ENCODE measurements at regions of chr12 and their contacts with region 1.

Region 1: DNA sequence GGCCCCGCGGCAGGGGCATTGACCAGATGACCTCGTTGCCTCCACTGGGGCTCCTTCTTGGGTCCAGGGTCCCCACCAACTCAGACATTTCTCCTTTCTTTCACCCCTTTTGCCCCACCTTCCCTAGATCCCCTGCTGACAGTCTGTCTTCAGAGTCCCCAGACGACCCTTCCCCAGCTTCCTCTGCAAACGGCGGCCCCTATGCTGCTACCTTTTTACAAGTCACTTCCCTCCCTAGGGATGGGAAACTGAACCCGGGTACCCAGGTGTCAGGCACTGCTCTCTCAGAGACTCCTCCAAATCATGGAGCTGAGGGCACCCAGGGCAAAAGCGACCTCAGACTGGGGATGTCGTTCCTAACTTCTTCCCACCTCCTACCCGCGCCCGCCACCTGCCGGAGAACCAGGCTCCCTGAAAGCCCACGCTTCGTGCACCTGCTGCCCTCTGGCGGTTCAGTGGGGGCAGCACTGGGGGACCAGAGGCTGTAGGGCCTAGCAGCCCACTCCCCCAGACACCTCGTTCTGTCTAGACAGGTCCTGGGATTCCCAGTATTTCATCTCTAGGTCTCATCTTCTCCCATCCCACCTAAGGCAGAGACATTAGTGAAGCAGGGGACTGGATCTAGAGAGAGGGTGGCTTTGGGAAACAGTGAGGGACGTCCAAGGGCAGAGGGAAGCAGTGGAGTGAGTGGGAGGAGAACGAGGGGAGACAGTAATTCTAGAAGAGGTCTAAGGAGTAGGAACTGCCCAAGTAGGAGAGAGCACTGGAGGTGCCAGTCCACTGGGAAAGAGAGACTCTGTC is 4.9 kb downstream of the ZNF385A start:
- DNase-seq: peak; percentile 83
- H3K4me3 ChIP-seq: peak overlapping the region in 2 of 3 experiments; percentile 10 to 47
- H3K27ac ChIP-seq: no peak overlapping the region
- H3K4me1 ChIP-seq: peaks cover 4% of the 10 kb centered on the region
- H3K27me3 ChIP-seq: no peaks in the 10 kb centered on the region
- CTCF ChIP-seq: peak; percentile 100
- POLR2A ChIP-seq: no peak

Region 2: DNA sequence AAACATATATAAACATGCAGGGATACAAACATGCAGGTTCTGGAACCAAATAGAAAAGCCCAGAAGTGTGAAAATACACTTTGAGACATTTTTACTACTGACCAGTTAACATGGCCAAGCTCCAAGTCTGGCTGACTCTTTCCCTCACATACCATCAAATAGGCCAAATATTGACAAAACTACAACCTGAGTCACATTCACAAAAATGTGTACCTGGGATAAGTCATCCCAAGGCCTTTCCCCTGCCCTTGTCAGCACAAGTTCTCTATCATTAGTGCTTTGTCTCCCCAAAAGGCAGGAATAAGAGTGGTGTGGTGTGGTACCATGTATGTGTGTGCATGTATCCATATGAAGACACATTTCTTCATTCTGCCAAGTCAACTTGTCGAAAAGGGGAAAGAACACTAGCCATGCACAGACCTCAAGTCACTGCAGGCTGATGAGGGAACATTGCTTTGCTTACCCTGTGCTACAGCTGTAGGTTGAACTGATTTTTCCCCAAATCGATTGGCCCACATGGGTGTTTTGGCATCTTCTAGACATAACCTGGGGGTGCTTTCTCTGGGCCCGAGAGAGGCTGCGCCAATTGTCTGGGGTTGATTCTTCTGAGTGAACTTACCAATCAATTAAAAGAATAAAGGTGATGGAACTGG is 311.1 kb before region 1 on chr12:
- CTCF ChIA-PET with region 1: no interaction called
- POLR2A ChIA-PET with region 1: no interaction called
- dilution Hi-C with region 1: no loop called
- intact Hi-C with region 1: no loop called
- DNase-seq: no peak
- H3K4me3 ChIP-seq: no peak overlapping the region
- H3K27ac ChIP-seq: no peak overlapping the region
- H3K4me1 ChIP-seq: no peaks in the 10 kb centered on the region
- H3K27me3 ChIP-seq: peaks cover 9 to 16% of the 10 kb centered on the region in 2 experiments
- CTCF ChIP-seq: no peak
- POLR2A ChIP-seq: no peak

Region 3: GRCh38 chr12:54220092-54220557 is 159.5 kb before region 1 on chr12:
- CTCF ChIA-PET with region 1: interaction called, 11 read pairs
- POLR2A ChIA-PET with region 1: interaction called, 6 read pairs
- dilution Hi-C with region 1: no loop called
- intact Hi-C with region 1: no loop called
- DNase-seq: peak; percentile 76
- H3K4me3 ChIP-seq: no peak overlapping the region
- H3K27ac ChIP-seq: no peak overlapping the region
- H3K4me1 ChIP-seq: peaks cover 14% of the 10 kb centered on the region
- H3K27me3 ChIP-seq: peaks cover 2 to 5% of the 10 kb centered on the region in 2 experiments
- CTCF ChIP-seq: peak; percentile 77 to 85
- POLR2A ChIP-seq: no peak

Region 4: GRCh38 chr12:54337280-54337842 is 42.2 kb before region 1 on chr12:
- CTCF ChIA-PET with region 1: interaction called, 6 read pairs
- POLR2A ChIA-PET with region 1: no interaction called
- dilution Hi-C with region 1: no loop called
- intact Hi-C with region 1: loop called (anchors 1 kb)
- DNase-seq: no peak
- H3K4me3 ChIP-seq: no peak overlapping the region
- H3K27ac ChIP-seq: no peak overlapping the region
- H3K4me1 ChIP-seq: no peaks in the 10 kb centered on the region
- H3K27me3 ChIP-seq: no peaks in the 10 kb centered on the region
- CTCF ChIP-seq: no peak
- POLR2A ChIP-seq: no peak

Region 5: DNA sequence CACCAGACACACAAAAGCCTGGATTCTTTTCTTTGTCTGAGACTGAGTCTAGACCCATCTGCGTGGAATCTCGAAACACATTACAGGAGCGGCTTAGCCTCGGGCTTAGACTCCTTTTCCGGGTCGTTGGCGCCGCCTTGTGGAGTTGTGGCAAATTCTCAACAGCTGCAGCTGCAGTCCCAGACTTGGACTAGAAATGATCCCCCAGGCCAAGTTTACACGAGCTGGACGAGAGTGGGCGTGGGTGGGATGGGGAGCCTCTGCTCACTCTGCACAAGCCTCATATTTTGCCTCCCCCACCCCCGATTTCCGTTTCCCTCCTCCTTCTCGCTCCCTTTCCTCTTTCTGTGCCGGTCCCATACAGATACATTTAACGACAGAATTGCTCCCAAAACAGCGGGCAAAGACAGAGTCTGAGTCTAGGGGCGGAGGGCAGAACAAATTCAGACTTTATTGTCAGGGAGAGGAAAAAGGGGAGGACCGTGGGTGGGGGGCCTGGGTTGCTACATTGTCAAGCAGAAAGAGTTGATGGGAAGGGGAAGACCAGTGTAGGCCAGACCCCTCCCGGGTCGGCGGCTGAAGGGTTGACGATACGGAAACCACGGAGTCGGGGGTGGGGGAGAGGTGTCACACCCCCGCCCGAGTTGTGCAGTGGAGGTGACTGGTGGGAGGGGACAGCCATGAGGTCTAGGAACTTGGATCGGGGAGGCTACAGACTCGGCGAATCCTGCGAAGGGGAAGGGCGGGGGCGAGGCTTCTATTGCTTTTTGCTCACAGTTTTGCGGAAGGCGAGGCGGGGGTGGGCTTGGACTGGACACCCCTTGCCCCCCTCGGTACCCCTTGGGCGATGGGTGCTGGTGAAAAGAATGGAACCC is 10.7 kb before region 1 on chr12:
- CTCF ChIA-PET with region 1: interaction called, 142 read pairs
- POLR2A ChIA-PET with region 1: interaction called, 5 read pairs
- dilution Hi-C with region 1: no loop called
- intact Hi-C with region 1: loop called (anchors 1 kb)
- DNase-seq: peak; percentile 85
- H3K4me3 ChIP-seq: peak overlapping the region; percentile 6 to 39 (median 23)
- H3K27ac ChIP-seq: no peak overlapping the region
- H3K4me1 ChIP-seq: peaks cover 33% of the 10 kb centered on the region
- H3K27me3 ChIP-seq: no peaks in the 10 kb centered on the region
- CTCF ChIP-seq: peak; percentile 91 to 92
- POLR2A ChIP-seq: no peak

Region 6: DNA sequence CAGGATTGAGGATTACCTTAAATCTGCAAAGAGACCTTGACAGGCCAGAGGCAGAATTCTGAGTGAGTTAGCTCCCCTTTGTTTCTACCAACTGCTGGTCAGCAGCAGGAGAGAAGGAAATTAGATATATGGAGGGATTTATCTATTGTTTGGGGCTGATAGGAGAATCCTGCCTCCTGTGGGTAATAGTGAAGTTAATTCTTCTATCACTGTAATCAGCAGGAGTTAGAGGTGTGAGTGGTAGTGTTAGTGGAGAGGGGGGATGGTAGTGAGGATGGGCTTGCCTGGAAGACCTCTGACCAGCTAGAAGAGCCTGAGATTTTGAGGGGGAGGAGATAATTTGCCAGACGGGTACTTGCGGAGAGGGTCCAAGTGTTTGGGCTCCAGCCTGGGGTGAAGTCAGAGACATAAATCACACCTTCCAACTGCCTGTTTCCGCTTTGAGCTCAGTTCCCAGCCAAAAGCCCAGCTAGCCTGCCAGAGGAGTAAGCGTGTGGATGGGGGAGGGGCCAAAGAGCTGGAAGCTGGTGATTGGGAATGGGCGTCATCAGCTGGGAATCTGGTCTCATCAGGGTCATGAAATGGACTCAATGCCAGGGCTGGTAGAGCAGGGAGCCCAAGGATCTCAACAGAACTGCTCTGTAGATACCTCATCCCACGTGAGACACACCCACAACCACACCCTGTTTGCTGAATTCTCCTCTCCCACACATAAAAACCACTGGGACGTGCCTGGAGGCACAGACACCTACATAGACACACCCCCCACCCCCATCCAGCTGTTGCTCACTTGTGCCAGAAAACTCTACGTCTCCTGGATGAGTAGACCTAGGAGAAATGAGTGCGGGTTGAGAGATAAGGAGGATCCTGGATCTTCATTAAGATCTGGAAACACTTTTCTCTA is 52.6 kb after region 1 on chr12:
- CTCF ChIA-PET with region 1: interaction called, 11 read pairs
- POLR2A ChIA-PET with region 1: no interaction called
- dilution Hi-C with region 1: no loop called
- intact Hi-C with region 1: no loop called
- DNase-seq: peak; percentile 97
- H3K4me3 ChIP-seq: peak overlapping the region in 1 of 3 experiments; percentile 39
- H3K27ac ChIP-seq: peak overlapping the region; percentile 91
- H3K4me1 ChIP-seq: peaks cover 59% of the 10 kb centered on the region
- H3K27me3 ChIP-seq: no peaks in the 10 kb centered on the region
- CTCF ChIP-seq: no peak
- POLR2A ChIP-seq: no peak

Region 7: DNA sequence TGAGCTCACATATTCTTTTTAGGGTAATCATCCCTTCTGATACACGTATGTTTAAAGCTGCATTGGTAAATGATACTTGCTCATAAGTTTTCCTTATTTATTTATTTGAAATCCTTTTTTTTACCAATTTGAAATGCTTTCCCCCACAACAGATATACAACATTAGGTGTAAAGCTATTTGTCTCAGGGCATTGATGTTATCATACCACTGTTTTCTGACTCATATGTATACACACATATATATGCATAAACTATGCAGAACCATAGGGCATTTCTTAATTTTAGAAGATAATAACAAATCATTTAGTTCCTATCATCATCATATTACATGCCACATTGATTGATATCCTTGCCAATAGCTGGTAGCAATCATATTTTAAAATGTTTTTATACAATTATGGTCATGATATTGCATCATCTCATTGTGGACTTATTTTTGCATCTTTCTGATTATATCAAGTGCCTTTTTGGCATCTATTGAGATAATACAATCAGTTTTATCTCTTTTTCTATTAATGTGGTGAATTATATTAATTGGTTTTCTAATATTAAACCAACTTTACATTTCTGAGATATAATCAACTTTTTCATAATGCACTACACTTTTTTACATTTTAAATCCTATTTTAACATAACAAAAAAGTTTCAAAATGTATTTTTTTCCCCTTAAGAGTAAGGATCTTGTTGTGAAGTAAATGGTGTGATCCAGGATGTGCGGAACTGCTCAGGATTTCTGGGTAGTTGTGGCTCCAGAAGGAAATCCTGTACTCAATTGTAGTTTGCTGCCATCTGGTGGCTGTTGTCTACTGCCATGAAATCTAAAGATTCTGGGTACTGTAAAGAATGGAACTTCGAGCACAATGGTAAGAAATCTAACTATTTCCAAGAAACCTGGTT is 763.3 kb after region 1 on chr12:
- CTCF ChIA-PET with region 1: no interaction called
- POLR2A ChIA-PET with region 1: no interaction called
- dilution Hi-C with region 1: no loop called
- intact Hi-C with region 1: no loop called
- DNase-seq: peak; percentile 47
- H3K4me3 ChIP-seq: no peak overlapping the region
- H3K27ac ChIP-seq: no peak overlapping the region
- H3K4me1 ChIP-seq: no peaks in the 10 kb centered on the region
- H3K27me3 ChIP-seq: no peaks in the 10 kb centered on the region
- CTCF ChIP-seq: peak; percentile 56 to 60
- POLR2A ChIP-seq: no peak

Measured in endothelial cell of umbilical vein (primary cell).